B cell (primary cell): ENCODE measurements at regions of chr20 and their contacts with region 1.

Region 1: DNA sequence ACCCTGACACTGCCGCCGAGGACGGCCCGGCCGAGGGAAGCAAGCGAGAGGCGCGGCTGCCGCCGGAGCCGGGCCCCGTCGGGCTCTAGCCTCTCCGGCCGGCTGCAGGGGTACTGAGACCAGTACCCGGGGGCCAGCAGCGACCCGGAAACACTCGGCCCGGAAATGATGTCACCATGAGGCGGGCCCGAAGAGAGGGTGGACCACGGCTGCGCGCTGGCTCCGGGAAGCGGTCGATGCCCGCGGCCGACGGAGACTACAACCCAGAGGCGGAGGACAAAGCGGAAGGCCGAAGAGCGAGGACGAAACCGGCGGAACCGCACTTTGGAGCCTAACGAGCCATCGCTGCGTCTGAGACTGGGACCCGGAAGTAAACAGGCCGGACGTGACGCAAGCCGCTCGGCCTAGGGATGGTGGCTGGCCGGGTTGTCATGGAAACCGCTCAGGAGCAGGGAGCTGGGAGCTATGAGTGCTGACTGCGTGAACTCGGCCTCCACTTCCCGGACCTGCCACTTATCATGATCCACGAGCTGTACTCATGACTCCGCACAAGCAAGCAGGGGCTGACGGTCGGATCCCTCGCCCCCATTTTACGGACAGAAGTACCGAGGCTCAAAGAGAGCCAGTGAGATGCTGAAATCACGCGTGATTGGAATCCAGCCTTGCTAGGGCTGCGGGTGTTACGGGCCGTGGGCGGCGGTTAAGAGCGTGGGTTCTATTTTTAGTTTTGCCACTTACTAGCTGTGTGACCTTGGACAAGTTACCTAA is at the start of gene SPATA2:
- DNase-seq: peak; percentile 99
- ATAC-seq: peak; percentile 81
- H3K4me3 ChIP-seq: peak within 1 kb of the TSS; percentile 79 to 96 (median 93)
- H3K4me3 Mint-ChIP-seq: peak within 1 kb of the TSS; percentile 99
- H3K27ac ChIP-seq: peak within 1 kb of the TSS; percentile 97 to 99
- H3K27ac Mint-ChIP-seq: peak within 1 kb of the TSS; percentile 100
- H3K4me1 ChIP-seq: peaks cover 12 to 26% of the 10 kb centered on the region in 2 donors
- H3K4me1 Mint-ChIP-seq: peaks cover 31% of the 10 kb centered on the region
- H3K27me3 ChIP-seq: no peaks in the 10 kb centered on the region
- H3K27me3 Mint-ChIP-seq: no peaks in the 10 kb centered on the region
- CTCF ChIP-seq: no peak
- total RNA-seq, gene SPATA2: 10.6 and 10.7 TPM in 2 replicates

Region 2: DNA sequence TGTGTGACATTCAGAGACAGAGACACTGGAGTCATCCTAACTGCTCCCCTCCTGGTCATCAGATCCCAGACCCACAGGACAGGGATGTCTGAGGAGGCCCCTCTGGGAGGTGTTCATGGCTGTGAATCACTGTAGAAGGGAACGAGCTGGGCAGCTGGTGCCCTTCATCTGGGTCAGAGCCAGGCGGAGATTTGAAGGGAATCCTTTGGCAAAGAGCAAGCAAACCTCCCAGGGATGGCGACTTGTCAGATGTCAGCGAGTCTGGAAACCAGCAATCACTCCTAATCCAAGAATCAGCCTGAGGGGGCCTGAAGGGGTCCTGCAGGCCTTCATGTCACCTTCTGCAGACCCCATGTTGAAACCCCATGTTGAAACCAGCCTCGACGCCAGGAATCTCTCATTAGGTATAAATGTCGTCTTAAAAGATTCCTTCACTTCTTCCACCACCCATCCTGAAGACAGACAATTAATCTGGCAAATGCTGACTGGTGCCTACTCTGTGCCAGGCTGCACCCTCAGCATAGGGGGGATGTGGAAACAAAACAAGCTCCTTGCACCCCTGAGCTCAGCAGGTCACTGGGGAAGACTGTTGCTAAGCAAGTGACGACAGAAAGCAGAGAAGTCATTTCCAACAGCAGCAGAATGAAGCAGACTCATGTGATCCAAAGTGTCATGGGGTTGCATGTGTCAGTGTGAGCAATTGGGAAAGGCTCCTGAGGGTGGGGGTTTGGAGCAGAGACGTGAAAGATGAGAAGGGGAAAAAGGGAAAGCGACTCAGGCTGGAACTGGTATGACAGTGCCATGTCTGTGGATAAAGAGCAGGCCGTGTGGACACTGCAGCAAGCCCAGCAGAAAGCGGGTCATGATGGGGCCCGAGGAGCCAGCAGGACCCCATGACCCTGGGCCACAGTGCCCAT is 1451.9 kb before region 1 on chr20:
- CTCF ChIA-PET with region 1: no interaction called
- POLR2A ChIA-PET with region 1: no interaction called
- intact Hi-C with region 1: no loop called
- DNase-seq: no peak
- ATAC-seq: no peak
- H3K4me3 ChIP-seq: no peak overlapping the region
- H3K4me3 Mint-ChIP-seq: no peak overlapping the region
- H3K27ac ChIP-seq: no peak overlapping the region
- H3K27ac Mint-ChIP-seq: no peak overlapping the region
- H3K4me1 ChIP-seq: peaks cover 0 to 8% of the 10 kb centered on the region in 2 donors
- H3K4me1 Mint-ChIP-seq: peaks cover 16% of the 10 kb centered on the region
- H3K27me3 ChIP-seq: peaks cover 0 to 5% (median 0%) of the 10 kb centered on the region in 4 experiments
- H3K27me3 Mint-ChIP-seq: peaks cover 12% of the 10 kb centered on the region
- CTCF ChIP-seq: no peak

Region 3: GRCh38 chr20:49928401-49929141 is 13.0 kb after region 1 on chr20:
- CTCF ChIA-PET with region 1: interaction called, 7 read pairs
- POLR2A ChIA-PET with region 1: interaction called, 3 read pairs
- intact Hi-C with region 1: loop called (anchors 1 kb)
- DNase-seq: peak; percentile 81
- ATAC-seq: peak; percentile 91
- H3K4me3 ChIP-seq: no peak overlapping the region
- H3K4me3 Mint-ChIP-seq: no peak overlapping the region
- H3K27ac ChIP-seq: no peak overlapping the region
- H3K27ac Mint-ChIP-seq: peak overlapping the region; percentile 15
- H3K4me1 ChIP-seq: no peaks in the 10 kb centered on the region
- H3K4me1 Mint-ChIP-seq: peaks cover 4% of the 10 kb centered on the region
- H3K27me3 ChIP-seq: no peaks in the 10 kb centered on the region
- H3K27me3 Mint-ChIP-seq: peaks cover 9% of the 10 kb centered on the region
- CTCF ChIP-seq: peak; percentile 95

Region 4: DNA sequence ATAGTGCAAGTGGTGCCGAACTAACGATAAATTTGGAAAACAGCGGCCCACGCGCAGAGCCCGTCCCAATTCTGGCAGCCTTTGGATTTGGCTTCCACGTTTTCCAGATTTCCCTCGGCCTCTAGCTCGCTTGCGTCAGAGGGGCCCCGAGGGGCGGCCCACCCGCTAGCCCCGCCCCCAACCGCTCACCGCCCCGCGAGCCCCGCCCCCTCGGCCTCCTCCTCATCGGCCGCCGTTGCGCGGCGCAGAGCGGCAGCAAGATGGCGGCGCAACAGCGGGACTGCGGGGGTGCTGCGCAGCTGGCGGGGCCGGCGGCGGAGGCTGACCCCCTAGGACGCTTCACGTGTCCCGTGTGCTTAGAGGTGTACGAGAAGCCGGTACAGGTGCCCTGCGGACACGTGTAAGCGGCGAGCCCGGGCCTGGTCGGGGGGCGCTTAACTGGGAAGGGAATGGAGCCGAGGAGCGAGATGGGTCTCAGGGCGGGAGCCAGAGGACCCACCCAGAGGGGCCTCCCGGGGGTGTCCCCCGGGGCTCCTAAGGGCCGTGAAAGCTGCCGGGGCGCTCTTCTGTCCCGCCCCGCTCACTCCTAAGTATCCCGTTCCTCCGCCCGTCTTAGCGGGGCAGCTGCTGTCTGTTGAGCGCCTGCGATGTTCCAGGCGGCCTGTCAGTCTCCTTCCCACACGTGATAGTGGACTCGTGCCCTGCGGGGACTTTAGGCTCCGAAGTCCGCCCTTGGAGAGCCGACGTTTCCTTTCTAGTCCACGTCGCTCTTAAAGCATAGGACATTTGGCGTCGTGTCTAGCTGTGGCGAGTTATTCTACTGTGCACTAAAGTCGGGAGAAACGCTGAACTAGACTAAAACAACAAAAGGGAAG is 20.8 kb after region 1 on chr20 and contains the start of gene RNF114:
- CTCF ChIA-PET with region 1: interaction called, 6 read pairs
- POLR2A ChIA-PET with region 1: interaction called, 19 read pairs
- intact Hi-C with region 1: loop called (anchors 1 kb)
- DNase-seq: peak; percentile 93
- ATAC-seq: peak; percentile 93
- H3K4me3 ChIP-seq: peak within 1 kb of the TSS; percentile 78 to 99 (median 94)
- H3K4me3 Mint-ChIP-seq: peak within 1 kb of the TSS; percentile 99
- H3K27ac ChIP-seq: peak within 1 kb of the TSS; percentile 89 to 90
- H3K27ac Mint-ChIP-seq: peak within 1 kb of the TSS; percentile 93
- H3K4me1 ChIP-seq: peaks cover 33 to 42% of the 10 kb centered on the region in 2 donors
- H3K4me1 Mint-ChIP-seq: peaks cover 49% of the 10 kb centered on the region
- H3K27me3 ChIP-seq: no peaks in the 10 kb centered on the region
- H3K27me3 Mint-ChIP-seq: no peaks in the 10 kb centered on the region
- CTCF ChIP-seq: no peak
- total RNA-seq, gene RNF114: 81.7 and 86.0 TPM in 2 replicates

Region 5: DNA sequence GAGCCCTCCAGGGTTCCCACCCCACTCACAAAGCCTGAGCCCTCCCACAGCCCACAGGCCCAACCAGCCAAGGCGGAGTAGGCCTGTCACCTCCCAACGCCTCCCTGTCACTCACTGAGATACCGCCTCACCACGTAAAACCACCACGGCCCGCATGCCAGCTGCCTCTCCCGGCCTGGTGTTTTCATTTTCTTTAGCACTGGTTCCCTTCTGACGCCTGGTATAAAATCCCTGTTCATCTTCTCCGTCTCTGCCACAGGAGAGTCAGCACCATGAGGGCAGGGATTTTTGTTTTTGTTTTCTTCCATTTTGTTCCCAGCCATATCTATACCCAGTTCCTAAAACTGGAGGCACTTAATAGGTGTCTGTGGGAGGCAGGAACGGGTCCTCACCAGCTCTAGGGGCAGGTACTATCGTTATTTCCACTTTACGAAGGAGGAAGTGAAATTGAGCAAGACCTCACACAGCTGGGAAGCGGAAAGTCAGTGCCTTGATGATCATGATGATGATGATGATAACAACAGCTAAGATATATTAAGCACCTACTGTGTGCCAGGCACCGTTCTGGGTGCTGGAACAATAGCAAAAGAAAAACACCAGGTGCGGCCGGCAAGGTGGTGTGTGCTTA is 125.8 kb after region 1 on chr20:
- CTCF ChIA-PET with region 1: no interaction called
- POLR2A ChIA-PET with region 1: no interaction called
- intact Hi-C with region 1: no loop called
- DNase-seq: peak; percentile 83
- ATAC-seq: peak; percentile 88
- H3K4me3 ChIP-seq: peak overlapping the region in 4 of 5 experiments; percentile 1 to 38 (median 34)
- H3K4me3 Mint-ChIP-seq: peak overlapping the region; percentile 83
- H3K27ac ChIP-seq: peak overlapping the region; percentile 80 to 86
- H3K27ac Mint-ChIP-seq: peak overlapping the region; percentile 93
- H3K4me1 ChIP-seq: peaks cover 12 to 22% of the 10 kb centered on the region in 2 donors
- H3K4me1 Mint-ChIP-seq: peaks cover 15% of the 10 kb centered on the region
- H3K27me3 ChIP-seq: no peaks in the 10 kb centered on the region
- H3K27me3 Mint-ChIP-seq: no peaks in the 10 kb centered on the region
- CTCF ChIP-seq: no peak